ENCODE measurements at regions of chr1 and their contacts with region 1.

Region 1: GRCh38 chr1:160085686-160086455 is 4.5 kb downstream of the KCNJ9 start:
- DNase-seq: peak; percentile 56
- H3K4me3 Mint-ChIP-seq: no peak overlapping the region
- H3K27ac Mint-ChIP-seq: no peak overlapping the region
- H3K4me1 Mint-ChIP-seq: peaks cover 17% of the 10 kb centered on the region
- H3K27me3 Mint-ChIP-seq: peaks cover 26% of the 10 kb centered on the region

Region 2: DNA sequence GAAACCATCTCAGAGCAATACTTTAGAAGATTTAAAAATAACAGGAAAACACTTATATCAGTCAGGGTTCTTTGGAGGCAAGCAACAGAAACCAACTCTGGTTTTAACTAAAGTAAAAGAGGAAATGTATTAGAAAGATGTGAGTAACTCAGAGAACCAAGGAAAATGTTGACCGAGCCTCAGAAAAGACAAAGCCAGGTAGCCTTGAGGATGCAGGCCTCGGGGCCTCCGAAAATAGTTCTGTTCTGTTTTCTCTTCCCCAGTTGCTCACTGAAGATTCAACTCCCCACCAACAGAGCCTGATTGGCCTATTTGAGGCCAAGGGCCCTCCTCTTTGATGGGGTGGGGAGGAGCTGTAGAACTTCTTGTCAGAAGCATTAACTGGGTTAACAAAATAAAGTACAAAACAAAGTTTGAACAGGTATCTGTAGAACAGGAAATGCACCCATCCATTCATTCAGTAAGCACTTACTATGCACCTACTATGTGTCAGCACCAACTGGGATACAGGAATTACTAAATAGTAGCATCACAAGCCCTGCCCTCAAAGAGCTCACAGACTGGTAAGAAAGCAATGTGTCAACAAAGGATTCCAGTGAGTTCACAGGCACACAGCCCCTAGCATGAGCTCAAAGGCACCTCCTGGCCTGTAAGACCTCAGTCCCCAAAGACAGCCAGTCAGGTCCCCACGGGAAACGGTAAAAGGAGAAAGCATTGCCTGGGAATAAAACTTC is 246.6 kb before region 1 on chr1:
- intact Hi-C with region 1: no loop called
- DNase-seq: no peak
- H3K4me3 Mint-ChIP-seq: no peak overlapping the region
- H3K27ac Mint-ChIP-seq: no peak overlapping the region
- H3K4me1 Mint-ChIP-seq: peaks cover 6% of the 10 kb centered on the region
- H3K27me3 Mint-ChIP-seq: peaks cover 33% of the 10 kb centered on the region

Region 3: GRCh38 chr1:160046494-160047110 is 39.3 kb before region 1 on chr1:
- intact Hi-C with region 1: loop called (anchors 1 kb)
- DNase-seq: peak; percentile 22
- H3K4me3 Mint-ChIP-seq: peak overlapping the region; percentile 55
- H3K27ac Mint-ChIP-seq: no peak overlapping the region
- H3K4me1 Mint-ChIP-seq: peaks cover 16% of the 10 kb centered on the region
- H3K27me3 Mint-ChIP-seq: peaks cover 16% of the 10 kb centered on the region

Region 4: GRCh38 chr1:160058087-160058486 is 27.8 kb before region 1 on chr1:
- intact Hi-C with region 1: no loop called
- DNase-seq: no peak
- H3K4me3 Mint-ChIP-seq: no peak overlapping the region
- H3K27ac Mint-ChIP-seq: no peak overlapping the region
- H3K4me1 Mint-ChIP-seq: no peaks in the 10 kb centered on the region
- H3K27me3 Mint-ChIP-seq: peaks cover 25% of the 10 kb centered on the region

Region 5: GRCh38 chr1:160070243-160071163 is 15.4 kb before region 1 on chr1:
- intact Hi-C with region 1: loop called (anchors 1 kb)
- DNase-seq: peak; percentile 25
- H3K4me3 Mint-ChIP-seq: peak overlapping the region; percentile 67
- H3K27ac Mint-ChIP-seq: no peak overlapping the region
- H3K4me1 Mint-ChIP-seq: peaks cover 7% of the 10 kb centered on the region
- H3K27me3 Mint-ChIP-seq: peaks cover 37% of the 10 kb centered on the region

Region 6: GRCh38 chr1:160474392-160475242 is 388.7 kb after region 1 on chr1:
- intact Hi-C with region 1: no loop called
- DNase-seq: no peak
- H3K4me3 Mint-ChIP-seq: no peak overlapping the region
- H3K27ac Mint-ChIP-seq: no peak overlapping the region
- H3K4me1 Mint-ChIP-seq: no peaks in the 10 kb centered on the region
- H3K27me3 Mint-ChIP-seq: no peaks in the 10 kb centered on the region

Measured in activated T-helper 1 cell treated with anti-CD3 and anti-CD28 coated beads, Interleukin-12 subunit alpha, Interleukin-12 subunit beta, Interleukin-2, Interleukin-4 antibody, amounts not matched to agents 30 ng/mL and 10 ng/mL and 1 ng/mL, durations not matched to agents 14 hours and 24 hours and 36 hours (primary cell).